ENCODE measurements at regions of chr6 and their contacts with region 1.

Region 1: GRCh38 chr6:117590447-117590846 is 11.9 kb downstream of the GOPC start:
- DNase-seq: no peak
- ATAC-seq: no peak
- H3K4me3 ChIP-seq: no peak overlapping the region
- H3K27ac ChIP-seq: no peak overlapping the region
- H3K4me1 ChIP-seq: 0 out of 2 replicates have a peak, but pooled peaks cover 3% of the 10 kb centered on the region
- H3K27me3 ChIP-seq: no peaks in the 10 kb centered on the region
- CTCF ChIP-seq: no peak

Region 2: DNA sequence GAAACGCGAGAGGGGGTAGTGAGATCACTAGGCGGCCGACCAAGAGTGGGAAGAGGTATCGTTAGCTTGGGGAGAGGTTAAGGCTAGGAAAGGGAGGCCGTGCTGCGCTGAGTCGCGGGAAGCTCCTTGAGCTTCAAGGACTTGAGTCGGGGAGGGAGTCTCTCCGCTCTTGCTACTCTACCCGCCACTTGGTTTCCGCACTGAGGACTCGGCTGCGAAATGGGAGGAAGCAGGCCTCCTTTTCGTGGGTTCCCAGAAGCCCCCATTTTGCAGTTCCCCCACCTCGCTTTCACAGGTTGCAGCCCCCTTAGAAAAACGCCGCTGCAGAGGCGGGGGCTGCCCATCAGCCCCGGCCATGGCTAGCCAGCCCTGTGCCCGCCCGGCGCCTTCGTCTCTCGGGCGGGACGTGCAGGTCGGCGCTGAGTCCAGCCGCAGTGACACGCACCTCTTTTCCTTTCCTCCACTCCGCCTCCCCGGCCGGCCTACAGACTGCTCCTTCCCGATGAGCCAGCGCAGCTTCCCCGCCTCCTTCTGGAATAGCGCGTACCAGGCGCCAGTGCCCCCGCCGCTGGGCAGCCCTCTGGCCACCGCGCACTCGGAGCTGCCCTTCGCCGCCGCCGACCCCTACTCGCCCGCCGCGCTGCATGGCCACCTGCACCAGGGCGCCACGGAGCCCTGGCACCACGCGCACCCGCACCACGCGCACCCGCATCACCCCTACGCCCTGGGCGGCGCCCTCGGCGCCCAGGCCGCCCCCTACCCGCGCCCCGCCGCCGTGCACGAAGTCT is 320.2 kb before region 1 on chr6:
- CTCF ChIA-PET with region 1: no interaction called
- POLR2A ChIA-PET with region 1: no interaction called
- in situ Hi-C with region 1: no loop called
- intact Hi-C with region 1: no loop called
- DNase-seq: no peak
- ATAC-seq: peak; percentile 75
- H3K4me3 ChIP-seq: peak overlapping the region in 1 of 2 experiments; percentile 31; a peak in 2 of 4 replicates
- H3K27ac ChIP-seq: no peak overlapping the region
- H3K4me1 ChIP-seq: peaks cover 7% of the 10 kb centered on the region
- H3K27me3 ChIP-seq: peaks cover 69% of the 10 kb centered on the region
- CTCF ChIP-seq: no peak

Region 3: DNA sequence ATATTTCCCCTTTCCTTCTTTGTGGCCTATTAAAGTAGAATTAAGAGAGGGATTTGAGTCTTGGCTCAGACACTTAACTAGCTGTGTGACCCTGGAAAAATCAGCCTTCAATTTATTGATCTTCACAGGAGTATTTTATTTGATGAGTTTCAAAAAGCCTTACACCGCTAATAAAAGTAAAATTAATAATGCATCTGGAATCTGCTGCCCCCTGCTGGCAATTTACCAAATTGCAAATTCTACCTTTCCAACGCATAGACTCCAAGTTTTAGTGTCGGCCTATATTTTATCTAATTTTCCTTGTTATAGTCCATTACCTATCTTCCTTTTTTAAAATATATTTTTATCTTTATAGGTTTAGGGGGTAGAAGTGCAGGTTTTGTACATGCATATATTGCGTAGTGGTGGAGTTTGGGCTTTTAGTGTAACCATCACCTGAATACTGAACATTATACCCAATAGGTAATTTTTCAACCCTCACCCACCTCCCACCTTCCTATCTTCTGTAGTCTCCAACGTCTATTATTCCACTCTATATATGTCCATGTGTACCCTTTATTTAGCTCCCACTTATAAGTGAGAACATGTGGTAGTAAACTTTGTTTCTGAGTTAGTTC is 34.5 kb before region 1 on chr6:
- CTCF ChIA-PET with region 1: interaction called, 17 read pairs
- POLR2A ChIA-PET with region 1: no interaction called
- in situ Hi-C with region 1: no loop called
- intact Hi-C with region 1: no loop called
- DNase-seq: no peak
- ATAC-seq: 0 out of 2 replicates have a peak, but pooled peaks have one; percentile 54
- H3K4me3 ChIP-seq: no peak overlapping the region
- H3K27ac ChIP-seq: peak overlapping the region; percentile 54
- H3K4me1 ChIP-seq: peaks cover 17% of the 10 kb centered on the region
- H3K27me3 ChIP-seq: no peaks in the 10 kb centered on the region
- CTCF ChIP-seq: peak; percentile 86; the same call in 1 of the 2 replicates

Measured in Panc1 (cell line).